HAP-1 (cell line): ENCODE measurements at regions of chr1 and their contacts with region 1.

Region 1: GRCh38 chr1:58649555-58649954 is 50.3 kb downstream of the MYSM1 start:
- DNase-seq: peak in 1 of 2 experiments; percentile 20
- H3K4me3 ChIP-seq: no peak overlapping the region
- H3K4me1 ChIP-seq: no peaks in the 10 kb centered on the region
- H3K27me3 ChIP-seq: no peaks in the 10 kb centered on the region

Region 2: GRCh38 chr1:58318157-58319005 is 331.2 kb before region 1 on chr1:
- in situ Hi-C with region 1: no loop called
- DNase-seq: no peak
- H3K4me3 ChIP-seq: no peak overlapping the region
- H3K4me1 ChIP-seq: no peaks in the 10 kb centered on the region
- H3K27me3 ChIP-seq: no peaks in the 10 kb centered on the region

Region 3: DNA sequence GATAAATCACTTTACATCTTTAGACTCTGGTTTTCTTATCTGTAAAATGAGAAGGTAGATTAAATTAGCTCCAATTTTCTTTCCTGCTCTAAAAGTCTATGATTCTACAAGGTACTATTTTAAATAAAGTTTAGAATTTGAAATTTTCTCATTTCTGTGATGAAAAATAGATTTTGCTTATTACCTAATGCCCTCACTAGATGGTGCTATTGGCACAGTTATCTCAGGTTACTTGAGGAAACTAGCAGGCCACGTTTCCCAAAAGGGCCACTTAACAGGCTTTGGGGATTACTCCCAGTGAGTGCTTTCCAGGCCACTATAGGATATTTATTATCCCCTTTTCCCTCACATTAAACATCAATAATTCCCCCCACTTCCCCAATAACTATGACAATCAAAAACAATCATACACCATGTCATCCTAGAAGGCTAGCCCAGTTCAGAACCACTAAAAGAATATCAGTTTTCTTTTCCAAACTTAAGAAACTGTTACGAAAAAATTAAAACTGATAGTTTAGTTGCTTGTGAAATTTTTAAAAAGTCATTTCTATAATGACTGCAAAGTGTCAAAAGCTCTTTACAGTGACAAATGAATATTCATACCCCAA is 133.7 kb before region 1 on chr1:
- in situ Hi-C with region 1: loop called (anchors 10 kb)
- DNase-seq: peak; percentile 52 to 57
- H3K4me3 ChIP-seq: no peak overlapping the region
- H3K4me1 ChIP-seq: no peaks in the 10 kb centered on the region
- H3K27me3 ChIP-seq: no peaks in the 10 kb centered on the region